ENCODE measurements at regions of chr20 and their contacts with region 1.

Region 1: GRCh38 chr20:62818592-62819493 is 2.0 kb downstream of the COL9A3 start:
- DNase-seq: no peak
- H3K4me3 ChIP-seq: no peak overlapping the region
- CTCF ChIP-seq: no peak

Region 2: GRCh38 chr20:62861726-62862336 is 43.0 kb after region 1 on chr20 and contains the start of gene TCFL5:
- in situ Hi-C with region 1: loop called (anchors 5 kb)
- DNase-seq: no peak
- H3K4me3 ChIP-seq: peak within 1 kb of the TSS; percentile 46
- CTCF ChIP-seq: no peak

Region 3: GRCh38 chr20:62900692-62901584 is 82.1 kb after region 1 on chr20:
- in situ Hi-C with region 1: no loop called
- DNase-seq: no peak
- H3K4me3 ChIP-seq: no peak overlapping the region
- CTCF ChIP-seq: peak; percentile 41